ENCODE measurements at regions of chr12 and their contacts with region 1.

Region 1: DNA sequence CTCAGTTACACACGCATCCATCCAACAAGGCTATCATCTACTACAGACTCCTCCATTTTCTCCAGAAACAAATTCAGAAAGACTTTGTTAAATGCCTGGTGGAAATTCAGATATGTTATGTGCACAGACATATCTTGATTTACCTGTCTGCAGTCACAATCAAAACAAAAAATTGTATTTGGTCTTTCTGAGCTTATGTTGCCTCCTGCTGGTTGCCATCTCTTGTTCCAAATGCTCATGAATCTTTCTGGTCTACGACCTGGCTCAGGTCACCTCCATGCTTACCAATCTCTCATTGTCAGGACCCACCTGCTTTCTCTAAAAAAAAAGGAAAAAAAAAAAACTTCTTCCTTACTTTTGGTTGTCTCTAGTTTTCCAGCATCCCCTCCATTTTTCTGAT is 169.2 kb upstream of the PLXNC1 start:
- DNase-seq: no peak
- ATAC-seq: peak; percentile 16

Region 2: GRCh38 chr12:93778306-93778705 is 200.9 kb before region 1 on chr12:
- intact Hi-C with region 1: loop called (anchors 10 kb)
- DNase-seq: peak; percentile 61
- ATAC-seq: peak; percentile 92

Region 3: GRCh38 chr12:94488463-94488862 is 509.3 kb after region 1 on chr12:
- intact Hi-C with region 1: no loop called
- DNase-seq: no peak
- ATAC-seq: no peak